K562 (cell line): ENCODE measurements at regions of chr17 and their contacts with region 1.

Region 1: DNA sequence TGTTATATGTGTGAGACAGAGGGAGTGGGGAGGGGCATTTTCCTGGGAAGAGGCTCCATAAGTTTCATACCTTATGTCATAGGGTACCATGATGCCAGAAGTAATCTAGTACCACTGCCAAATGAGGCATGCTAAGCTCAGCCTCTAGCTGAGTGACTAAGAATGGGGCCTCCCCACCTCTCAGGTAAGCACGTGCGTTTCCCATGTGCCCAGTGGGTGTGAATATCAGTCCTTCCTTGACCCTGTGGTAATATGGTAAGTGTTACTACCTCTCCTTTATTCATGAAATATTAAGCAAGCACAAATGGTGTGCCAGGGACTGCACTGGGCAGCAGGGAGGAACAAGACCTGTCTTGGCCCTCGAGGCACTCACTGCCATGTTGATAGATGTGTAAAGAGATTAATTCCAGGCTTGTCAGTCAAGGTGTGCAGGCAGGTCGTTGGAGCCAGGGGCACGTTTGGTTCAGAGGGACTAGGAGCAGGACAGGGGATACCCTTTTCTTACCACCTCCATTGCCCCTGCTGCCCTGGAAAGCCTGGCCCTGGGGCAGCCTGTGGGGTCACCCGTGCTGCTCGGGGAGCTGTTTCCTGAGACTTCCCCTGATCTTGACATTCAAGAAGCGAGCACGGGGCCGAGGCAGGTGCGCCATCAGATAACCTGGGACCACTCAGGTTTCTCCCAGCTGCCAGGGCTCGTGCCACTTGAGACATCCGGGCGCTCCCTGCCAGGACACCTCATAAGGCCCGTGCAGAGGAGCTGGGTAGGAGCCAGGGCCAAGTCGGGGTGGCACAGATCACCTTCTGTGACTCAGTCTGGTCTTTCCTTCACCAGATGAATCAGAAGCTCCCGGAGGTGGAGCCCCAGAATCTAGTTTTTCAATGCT is 8.8 kb downstream of the RSAD1 start:
- DNase-seq: no peak
- ATAC-seq: no peak
- H3K4me3 ChIP-seq: no peak overlapping the region
- H3K27ac ChIP-seq: no peak overlapping the region
- H3K4me1 ChIP-seq: no peaks in the 10 kb centered on the region
- H3K27me3 ChIP-seq: no peaks in the 10 kb centered on the region
- CTCF ChIP-seq: no peak
- EP300 ChIP-seq: no peak
- POLR2A ChIP-seq: no peak
- RAD21 ChIP-seq: no peak

Region 2: GRCh38 chr17:50210240-50211225 is 276.9 kb before region 1 on chr17:
- CTCF ChIA-PET with region 1: no interaction called
- POLR2A ChIA-PET with region 1: no interaction called
- in situ Hi-C with region 1: no loop called
- intact Hi-C with region 1: no loop called
- DNase-seq: peak; percentile 48 to 76 (median 68)
- ATAC-seq: no peak
- H3K4me3 ChIP-seq: no peak overlapping the region
- H3K27ac ChIP-seq: peak overlapping the region; percentile 29; the same call in 1 of the 3 replicates
- H3K4me1 ChIP-seq: peaks cover 59 to 63% of the 10 kb centered on the region in 2 experiments
- H3K27me3 ChIP-seq: no peaks in the 10 kb centered on the region
- CTCF ChIP-seq: no peak
- EP300 ChIP-seq: no peak
- POLR2A ChIP-seq: no peak
- RAD21 ChIP-seq: no peak

Region 3: GRCh38 chr17:50406578-50406977 is 80.9 kb before region 1 on chr17:
- CTCF ChIA-PET with region 1: no interaction called
- POLR2A ChIA-PET with region 1: no interaction called
- in situ Hi-C with region 1: no loop called
- intact Hi-C with region 1: no loop called
- DNase-seq: no peak
- ATAC-seq: no peak
- H3K4me3 ChIP-seq: no peak overlapping the region
- H3K27ac ChIP-seq: no peak overlapping the region
- H3K4me1 ChIP-seq: peaks cover 0 to 4% of the 10 kb centered on the region in 2 experiments; a peak in 2 of 5 replicates
- H3K27me3 ChIP-seq: no peaks in the 10 kb centered on the region; a peak in 1 of 5 replicates
- CTCF ChIP-seq: no peak
- EP300 ChIP-seq: no peak
- POLR2A ChIP-seq: no peak
- RAD21 ChIP-seq: no peak

Region 4: DNA sequence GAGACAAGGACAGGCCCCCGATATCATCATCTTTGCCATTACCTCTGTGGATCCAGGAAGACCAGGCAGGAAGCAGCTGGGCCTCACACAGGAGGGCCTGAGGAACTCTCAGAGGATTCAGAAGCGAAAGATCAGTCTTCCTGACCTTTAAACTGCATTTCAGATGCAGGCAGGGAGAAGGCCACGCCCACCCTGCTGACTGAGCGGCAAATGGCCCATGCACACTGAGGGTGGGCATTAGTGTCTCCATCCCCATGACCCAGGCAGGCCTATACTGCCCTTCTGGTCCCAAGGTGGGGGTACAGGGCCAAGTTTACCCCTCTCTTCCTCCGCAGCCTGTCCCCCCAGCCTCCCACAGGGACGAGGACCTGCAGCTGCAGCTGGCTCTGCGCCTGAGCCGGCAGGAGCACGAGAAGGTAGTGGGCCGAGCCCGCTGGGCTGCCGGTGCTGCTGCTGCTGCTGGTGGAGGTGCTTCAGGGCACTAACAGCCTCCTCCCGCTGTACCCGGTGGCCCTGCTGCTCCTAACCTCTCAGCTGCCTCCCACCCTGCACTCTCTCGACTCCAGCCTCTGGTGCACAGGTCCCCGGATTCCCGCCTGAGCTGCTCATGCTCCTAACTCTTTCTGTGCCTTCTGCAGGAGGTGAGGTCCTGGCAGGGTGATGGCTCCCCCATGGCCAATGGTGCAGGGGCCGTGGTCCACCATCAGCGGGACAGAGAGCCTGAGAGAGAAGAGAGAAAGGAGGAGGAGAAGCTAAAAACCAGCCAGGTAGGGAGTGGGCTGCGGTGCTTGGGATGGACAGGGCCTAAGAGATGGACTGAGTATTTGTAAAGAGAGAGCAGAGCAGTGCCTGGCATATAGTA is 51.3 kb after region 1 on chr17:
- CTCF ChIA-PET with region 1: no interaction called
- POLR2A ChIA-PET with region 1: no interaction called
- in situ Hi-C with region 1: no loop called
- intact Hi-C with region 1: no loop called
- DNase-seq: no peak
- ATAC-seq: no peak
- H3K4me3 ChIP-seq: no peak overlapping the region
- H3K27ac ChIP-seq: no peak overlapping the region
- H3K4me1 ChIP-seq: peaks cover 6 to 58% of the 10 kb centered on the region in 2 experiments; a peak in 4 of 5 replicates
- H3K27me3 ChIP-seq: peaks cover 4 to 31% of the 10 kb centered on the region in 2 experiments; a peak in 3 of 5 replicates
- CTCF ChIP-seq: no peak
- EP300 ChIP-seq: no peak
- POLR2A ChIP-seq: no peak
- RAD21 ChIP-seq: no peak

Region 5: GRCh38 chr17:50620858-50621257 is 133.4 kb after region 1 on chr17:
- CTCF ChIA-PET with region 1: no interaction called
- POLR2A ChIA-PET with region 1: no interaction called
- in situ Hi-C with region 1: loop called (anchors 5 kb)
- intact Hi-C with region 1: loop called (anchors 1 kb)
- DNase-seq: peak in 3 of 4 experiments; percentile 34 to 54 (median 51)
- ATAC-seq: peak; percentile 77
- H3K4me3 ChIP-seq: no peak overlapping the region
- H3K27ac ChIP-seq: no peak overlapping the region
- H3K4me1 ChIP-seq: peaks cover 7 to 32% of the 10 kb centered on the region in 2 experiments; a peak in 3 of 5 replicates
- H3K27me3 ChIP-seq: peaks cover 15 to 55% of the 10 kb centered on the region in 2 experiments; a peak in 4 of 5 replicates
- CTCF ChIP-seq: peak; percentile 41 to 62 (median 61)
- EP300 ChIP-seq: no peak
- POLR2A ChIP-seq: no peak
- RAD21 ChIP-seq: 0 out of 4 replicates have a peak, but pooled peaks of 1 of the 2 experiments have one; percentile 9

Region 6: DNA sequence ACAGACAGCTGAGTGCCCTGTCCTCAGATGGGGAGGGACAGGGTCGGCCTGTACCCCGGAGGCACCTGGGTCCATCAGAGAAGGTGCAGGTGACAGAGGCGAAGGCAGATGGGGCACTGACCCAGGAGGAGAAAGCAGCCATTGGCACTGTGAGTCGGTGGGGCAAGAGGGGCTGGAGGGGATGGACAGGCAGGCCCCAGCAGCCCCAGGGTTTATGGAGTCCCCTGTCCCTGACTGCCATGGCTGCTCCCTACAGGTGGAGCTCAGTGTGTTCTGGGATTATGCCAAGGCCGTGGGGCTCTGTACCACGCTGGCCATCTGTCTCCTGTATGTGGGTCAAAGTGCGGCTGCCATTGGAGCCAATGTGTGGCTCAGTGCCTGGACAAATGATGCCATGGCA is 188.2 kb after region 1 on chr17:
- CTCF ChIA-PET with region 1: interaction called, 5 read pairs
- POLR2A ChIA-PET with region 1: no interaction called
- in situ Hi-C with region 1: loop called (anchors 5 kb)
- intact Hi-C with region 1: loop called (anchors 5 kb)
- DNase-seq: no peak
- ATAC-seq: no peak
- H3K4me3 ChIP-seq: no peak overlapping the region
- H3K27ac ChIP-seq: no peak overlapping the region
- H3K4me1 ChIP-seq: peaks cover 0 to 16% of the 10 kb centered on the region in 2 experiments; a peak in 3 of 5 replicates
- H3K27me3 ChIP-seq: peaks cover 5 to 59% of the 10 kb centered on the region in 2 experiments; a peak in 4 of 5 replicates
- CTCF ChIP-seq: no peak
- EP300 ChIP-seq: no peak
- POLR2A ChIP-seq: no peak
- RAD21 ChIP-seq: no peak